Gastrocnemius medialis (tissue), 4 donors: ENCODE measurements at regions of chrX and their contacts with region 1.

Region 1: DNA sequence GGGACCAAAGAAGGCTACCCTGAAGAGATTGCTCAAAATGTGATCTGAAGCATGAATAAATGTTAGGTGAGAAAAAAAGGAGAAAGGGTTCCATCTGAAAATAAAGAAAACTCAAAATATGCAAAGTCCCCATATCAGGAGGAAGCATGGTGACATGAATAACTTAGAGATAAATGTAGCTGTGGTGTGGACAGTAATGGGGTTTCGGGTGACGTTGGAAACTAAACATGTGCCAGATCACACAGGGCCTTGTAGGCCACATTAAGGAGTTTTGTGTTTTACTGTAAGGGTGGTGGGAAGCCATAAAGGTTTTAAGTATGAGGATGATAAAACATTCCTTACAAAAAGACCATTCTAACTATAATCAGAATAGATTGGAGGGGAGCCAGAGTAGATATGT is 40.3 kb upstream of the ACSL4 start:
- DNase-seq: no peak
- ATAC-seq: no peak
- H3K4me3 ChIP-seq: no peak overlapping the region
- H3K27ac ChIP-seq: no peak overlapping the region
- H3K4me1 ChIP-seq: no peaks in the 10 kb centered on the region
- H3K27me3 ChIP-seq: no peaks in the 10 kb centered on the region
- CTCF ChIP-seq: no peak
- POLR2A ChIP-seq: no peak

Region 2: GRCh38 chrX:109679820-109680219 is 93.6 kb before region 1 on chrX:
- in situ Hi-C with region 1: no loop called
- intact Hi-C with region 1: no loop called
- DNase-seq: no peak
- ATAC-seq: no peak
- H3K4me3 ChIP-seq: no peak overlapping the region
- H3K27ac ChIP-seq: no peak overlapping the region
- H3K4me1 ChIP-seq: no peaks in the 10 kb centered on the region
- H3K27me3 ChIP-seq: no peaks in the 10 kb centered on the region
- CTCF ChIP-seq: no peak
- POLR2A ChIP-seq: no peak

Region 3: DNA sequence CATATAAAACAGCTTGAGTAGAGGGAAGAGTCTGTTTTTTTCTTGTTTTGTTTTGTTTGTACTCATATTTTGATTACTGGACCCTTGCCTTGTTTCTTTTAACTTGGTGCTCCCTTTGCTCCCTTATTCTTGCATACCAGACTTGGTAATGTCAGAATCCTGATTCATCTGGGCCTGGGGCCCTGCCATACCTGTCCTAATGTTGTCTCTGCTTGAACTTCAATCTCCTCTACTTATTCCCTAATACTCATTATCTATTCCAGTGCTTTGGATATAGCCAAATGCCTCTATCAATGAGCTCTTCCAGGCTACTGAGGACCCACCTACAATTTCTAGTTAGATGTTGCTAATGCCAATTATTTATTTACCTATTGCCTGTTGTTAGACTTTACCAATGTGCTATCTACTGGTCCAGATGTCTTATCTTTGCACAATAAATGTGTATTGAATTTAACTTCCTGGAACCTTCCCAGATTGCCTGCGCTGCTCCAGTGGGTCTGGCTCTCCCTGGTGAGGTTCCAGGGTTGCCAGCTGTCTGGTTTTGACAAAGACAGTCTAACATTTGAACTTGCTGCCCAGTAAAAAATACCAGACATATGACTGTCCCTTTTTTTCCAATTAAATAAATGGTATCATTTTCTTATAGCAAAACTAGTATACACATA is 24.1 kb after region 1 on chrX:
- in situ Hi-C with region 1: no loop called
- intact Hi-C with region 1: loop called (anchors 1 kb)
- DNase-seq: no peak
- ATAC-seq: no peak
- H3K4me3 ChIP-seq: no peak overlapping the region
- H3K27ac ChIP-seq: no peak overlapping the region
- H3K4me1 ChIP-seq: no peaks in the 10 kb centered on the region
- H3K27me3 ChIP-seq: no peaks in the 10 kb centered on the region
- CTCF ChIP-seq: no peak
- POLR2A ChIP-seq: no peak